T-cell (primary cell): ENCODE measurements at regions of chr6 and their contacts with region 1.

Region 1: DNA sequence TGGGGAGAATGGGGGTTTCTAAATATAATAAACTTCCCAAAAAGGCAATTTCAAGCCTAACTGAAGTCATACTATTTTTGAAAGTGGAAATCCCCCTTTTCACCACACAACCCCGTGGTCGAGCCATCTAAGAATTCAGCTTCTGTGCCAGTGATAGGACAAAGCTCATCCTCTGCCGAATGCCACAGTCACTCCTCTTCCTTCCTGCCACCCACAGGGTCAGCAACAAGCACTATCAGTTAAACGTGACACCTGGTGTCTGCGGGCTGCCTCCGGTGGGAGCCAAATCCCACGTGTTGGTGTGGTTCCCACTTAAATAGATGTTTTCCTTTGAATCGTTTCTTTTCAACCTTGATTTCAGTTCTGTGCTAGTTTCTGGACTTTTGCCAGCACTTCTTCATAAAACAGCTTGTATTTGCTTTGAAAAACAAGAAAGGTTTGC is 60.7 kb downstream of the TNFAIP3 start:
- DNase-seq: peak; percentile 28 to 91 (median 73)
- ATAC-seq: peak; percentile 92 to 100 (median 94)
- H3K4me3 ChIP-seq: peak overlapping the region in 1 of 2 donors; percentile 29
- H3K4me3 Mint-ChIP-seq: peak overlapping the region; percentile 34 to 57 (median 38)
- H3K27ac ChIP-seq: peak overlapping the region; percentile 67
- H3K27ac Mint-ChIP-seq: peak overlapping the region; percentile 66 to 79
- H3K4me1 ChIP-seq: peaks cover 27 to 28% of the 10 kb centered on the region in 2 experiments
- H3K4me1 Mint-ChIP-seq: peaks cover 32 to 41% (median 33%) of the 10 kb centered on the region in 3 donors
- H3K27me3 ChIP-seq: no peaks in the 10 kb centered on the region
- H3K27me3 Mint-ChIP-seq: no peaks in the 10 kb centered on the region

Region 2: DNA sequence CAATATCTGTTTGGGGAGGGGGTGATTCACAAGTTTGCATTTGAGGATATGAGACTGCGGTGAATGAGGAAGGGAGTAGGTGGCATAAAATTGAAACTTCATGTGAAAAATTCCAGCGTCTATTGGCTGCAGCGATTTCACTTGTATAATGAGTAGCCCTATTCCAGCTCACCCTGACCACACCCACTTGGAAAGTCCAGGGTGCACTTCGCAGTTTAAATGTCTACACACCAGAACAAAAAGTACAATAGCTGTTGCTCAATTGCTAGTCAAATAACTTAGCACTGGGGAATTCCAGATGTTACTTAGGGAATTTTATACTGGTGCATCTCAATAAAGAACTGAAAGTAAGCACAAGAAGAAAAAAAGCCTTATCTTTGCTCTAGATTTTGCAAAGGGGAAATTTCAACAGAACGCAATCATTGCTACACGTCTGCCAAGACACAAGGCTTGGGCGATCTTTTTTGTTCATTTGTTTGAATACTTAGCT is 54.5 kb before region 1 on chr6:
- CTCF ChIA-PET with region 1: interaction called, 6 to 10 read pairs
- POLR2A ChIA-PET with region 1: interaction called, 3 to 4 read pairs
- DNase-seq: peak in 21 of 35 experiments; percentile 22 to 85 (median 47)
- ATAC-seq: peak in 2 of 4 experiments; percentile 14 to 29
- H3K4me3 ChIP-seq: peak overlapping the region in 1 of 2 donors; percentile 23
- H3K4me3 Mint-ChIP-seq: peak overlapping the region; percentile 92 to 98 (median 96)
- H3K27ac ChIP-seq: peak overlapping the region; percentile 99
- H3K27ac Mint-ChIP-seq: peak overlapping the region; percentile 95 to 98
- H3K4me1 ChIP-seq: peaks cover 40 to 44% of the 10 kb centered on the region in 2 experiments
- H3K4me1 Mint-ChIP-seq: peaks cover 89 to 92% (median 90%) of the 10 kb centered on the region in 3 donors
- H3K27me3 ChIP-seq: no peaks in the 10 kb centered on the region
- H3K27me3 Mint-ChIP-seq: no peaks in the 10 kb centered on the region

Region 3: GRCh38 chr6:137944793-137945498 is 17.1 kb after region 1 on chr6:
- CTCF ChIA-PET with region 1: interaction called, 4 to 10 read pairs
- POLR2A ChIA-PET with region 1: interaction called in 1 of 2 experiments, 4 read pairs
- DNase-seq: peak in 8 of 35 experiments; percentile 6 to 63 (median 14)
- ATAC-seq: peak; percentile 64 to 79 (median 77)
- H3K4me3 ChIP-seq: no peak overlapping the region
- H3K4me3 Mint-ChIP-seq: no peak overlapping the region
- H3K27ac ChIP-seq: no peak overlapping the region
- H3K27ac Mint-ChIP-seq: no peak overlapping the region
- H3K4me1 ChIP-seq: peaks cover under 1 to 8% of the 10 kb centered on the region in 2 experiments
- H3K4me1 Mint-ChIP-seq: peaks cover 18 to 23% (median 19%) of the 10 kb centered on the region in 3 donors
- H3K27me3 ChIP-seq: no peaks in the 10 kb centered on the region
- H3K27me3 Mint-ChIP-seq: no peaks in the 10 kb centered on the region

Region 4: DNA sequence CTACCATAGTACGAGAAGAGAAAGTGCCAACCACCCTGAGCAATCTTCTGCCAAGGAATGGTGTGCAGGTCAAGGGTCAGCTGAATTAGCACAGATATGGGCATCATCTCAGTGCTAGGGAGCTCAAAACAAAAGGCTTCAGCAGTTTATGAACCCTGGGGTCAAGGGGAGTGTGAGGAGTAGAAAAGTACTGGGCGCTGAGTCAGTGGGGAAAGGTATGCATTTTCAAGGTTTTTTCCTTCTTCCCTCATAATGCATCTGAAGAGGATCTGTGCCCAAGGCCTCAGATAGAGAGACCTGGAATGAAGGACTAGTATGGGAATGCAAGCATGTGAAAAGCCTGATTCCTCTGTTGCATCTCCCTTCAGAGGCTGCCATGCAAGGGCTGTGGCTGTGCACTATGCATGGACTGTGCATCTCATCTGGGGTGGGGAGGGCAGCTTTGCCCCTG is 97.8 kb after region 1 on chr6:
- CTCF ChIA-PET with region 1: no interaction called
- POLR2A ChIA-PET with region 1: no interaction called
- DNase-seq: no peak
- ATAC-seq: no peak
- H3K4me3 ChIP-seq: no peak overlapping the region
- H3K4me3 Mint-ChIP-seq: no peak overlapping the region
- H3K27ac ChIP-seq: no peak overlapping the region
- H3K27ac Mint-ChIP-seq: no peak overlapping the region
- H3K4me1 ChIP-seq: no peaks in the 10 kb centered on the region
- H3K4me1 Mint-ChIP-seq: no peaks in the 10 kb centered on the region
- H3K27me3 ChIP-seq: no peaks in the 10 kb centered on the region
- H3K27me3 Mint-ChIP-seq: peaks cover 10 to 27% of the 10 kb centered on the region in 2 donors